CD4-positive, alpha-beta T cell (primary cell): ENCODE measurements at regions of chr20 and their contacts with region 1.

Region 1: DNA sequence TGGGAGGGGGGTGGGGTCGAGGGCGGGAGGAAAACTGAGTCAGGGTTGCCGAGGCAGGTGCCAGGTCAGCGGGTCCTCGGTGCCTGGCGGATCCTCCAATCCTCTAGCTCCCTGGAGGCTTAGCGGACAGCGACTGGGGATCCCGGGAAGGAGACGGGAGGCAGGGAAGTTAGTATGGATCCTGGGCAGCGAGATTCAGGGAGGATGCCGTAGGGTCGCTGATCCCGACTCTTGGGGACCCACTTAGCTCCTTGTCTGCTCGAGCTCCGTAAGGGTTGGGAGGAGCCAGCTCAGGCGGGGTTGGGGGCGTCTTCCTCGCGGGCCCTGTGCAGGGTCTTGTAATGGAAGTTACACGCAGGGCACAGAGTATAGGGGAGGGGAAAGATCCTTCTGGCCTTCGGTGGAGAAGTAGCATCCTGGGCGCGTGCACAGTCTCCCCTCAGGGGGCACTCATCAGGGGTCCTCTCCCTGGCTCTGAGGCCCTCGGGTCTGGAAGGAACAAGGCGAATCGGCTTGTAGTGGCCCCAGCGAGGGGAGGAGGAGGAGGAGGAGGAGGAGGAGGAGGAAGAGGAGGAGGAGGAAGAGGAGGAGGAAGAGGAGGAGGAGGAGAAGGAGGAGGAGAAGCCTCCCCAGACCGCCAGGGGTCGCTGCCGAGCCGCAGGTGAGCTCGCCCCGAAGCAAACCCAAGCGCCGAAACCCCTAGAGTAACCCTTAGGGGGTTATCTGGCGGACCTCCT is 6.4 kb upstream of the SLC12A5 start:
- DNase-seq: peak; percentile 59 to 85 (median 69)
- ATAC-seq: peak; percentile 59
- H3K4me3 ChIP-seq: peak overlapping the region; percentile 25
- H3K4me3 Mint-ChIP-seq: peak overlapping the region; percentile 69
- H3K27ac ChIP-seq: no peak overlapping the region
- H3K27ac Mint-ChIP-seq: no peak overlapping the region
- H3K4me1 ChIP-seq: peaks cover 25% of the 10 kb centered on the region
- H3K4me1 Mint-ChIP-seq: peaks cover 23% of the 10 kb centered on the region
- H3K27me3 ChIP-seq: peaks cover 25 to 56% of the 10 kb centered on the region in 2 experiments
- H3K27me3 Mint-ChIP-seq: peaks cover 74% of the 10 kb centered on the region
- CTCF ChIP-seq: peak; percentile 75

Region 2: DNA sequence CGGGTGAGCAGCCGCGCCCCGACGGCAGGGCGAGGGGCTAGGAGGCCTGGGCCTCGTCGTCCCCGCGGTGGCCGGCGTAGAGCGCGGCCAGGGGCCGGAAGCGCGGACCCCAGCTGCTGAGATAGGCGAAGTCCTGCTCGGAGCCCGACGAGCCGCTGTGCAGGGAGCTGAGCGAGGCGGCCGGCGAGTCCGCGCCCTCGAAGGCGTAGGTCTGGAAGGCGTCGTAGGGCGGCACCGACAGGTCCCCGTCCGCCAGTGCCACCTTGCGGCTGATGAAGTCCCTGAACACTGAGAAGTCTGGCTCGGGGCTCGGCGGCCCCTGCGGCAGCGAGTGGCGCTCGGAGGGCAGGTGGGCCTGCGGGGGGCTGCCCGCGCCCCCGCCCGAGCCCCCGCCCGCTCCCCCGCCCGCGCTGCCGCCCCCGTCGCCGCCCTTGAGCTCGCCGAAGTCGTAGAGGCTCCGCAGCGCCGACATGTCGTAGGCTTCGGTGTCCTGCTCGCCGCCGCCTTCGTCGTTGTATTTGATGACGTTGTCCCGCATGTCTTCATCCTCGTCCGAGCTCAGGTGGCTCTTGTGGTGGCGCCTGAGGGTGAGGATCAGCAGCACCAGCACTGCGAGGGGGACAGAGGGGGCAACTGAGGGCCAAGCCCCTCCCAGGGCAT is 152.0 kb after region 1 on chr20:
- CTCF ChIA-PET with region 1: interaction called, 10 read pairs
- POLR2A ChIA-PET with region 1: no interaction called
- intact Hi-C with region 1: loop called (anchors 1 to 2 kb)
- DNase-seq: peak; percentile 50 to 83 (median 64)
- ATAC-seq: peak; percentile 90
- H3K4me3 ChIP-seq: no peak overlapping the region
- H3K4me3 Mint-ChIP-seq: no peak overlapping the region
- H3K27ac ChIP-seq: no peak overlapping the region
- H3K27ac Mint-ChIP-seq: no peak overlapping the region
- H3K4me1 ChIP-seq: peaks cover 3% of the 10 kb centered on the region
- H3K4me1 Mint-ChIP-seq: no peaks in the 10 kb centered on the region
- H3K27me3 ChIP-seq: peaks cover 25 to 49% of the 10 kb centered on the region in 2 experiments
- H3K27me3 Mint-ChIP-seq: peaks cover 90% of the 10 kb centered on the region
- CTCF ChIP-seq: peak; percentile 39